HCT116 (cell line): ENCODE measurements at regions of chr3 and their contacts with region 1.

Region 1: DNA sequence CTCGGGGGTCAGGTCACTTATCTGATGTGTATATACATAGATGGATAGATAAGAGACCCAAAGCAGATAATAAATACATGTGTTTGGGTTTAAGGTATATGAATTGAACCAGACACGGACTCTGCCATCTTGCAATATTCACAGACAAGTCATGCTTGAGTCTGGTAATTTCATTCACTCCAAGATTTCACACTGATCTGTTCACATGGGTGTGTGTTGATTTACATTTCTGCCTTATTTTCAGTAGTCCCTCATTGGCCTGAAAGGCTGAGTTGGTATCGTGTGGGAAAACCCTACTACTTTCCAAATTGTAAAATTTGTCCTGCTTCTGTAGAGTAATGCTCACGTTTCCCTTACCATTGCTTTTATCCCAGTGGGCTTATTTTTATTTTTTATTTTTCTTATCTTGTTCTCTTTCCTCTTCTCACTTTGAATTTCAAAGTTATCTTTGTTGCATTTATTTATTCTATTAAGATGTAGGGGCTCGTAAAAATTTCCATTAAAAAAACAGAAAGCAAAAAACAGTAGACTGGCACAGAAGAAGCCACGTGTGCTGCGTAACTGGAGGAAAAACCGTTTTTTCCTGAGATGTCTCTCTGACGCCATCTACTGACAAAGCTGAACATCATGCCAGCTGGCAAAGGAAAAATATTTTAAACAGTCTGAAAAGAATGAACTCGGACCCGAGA is 10.8 kb upstream of the MFSD1 start:
- DNase-seq: peak; percentile 48
- ATAC-seq: peak; percentile 73
- H3K4me3 ChIP-seq: no peak overlapping the region
- H3K27ac ChIP-seq: no peak overlapping the region
- H3K4me1 ChIP-seq: peaks cover 2 to 4% of the 10 kb centered on the region in 2 experiments; a peak in 3 of 4 replicates
- H3K27me3 ChIP-seq: no peaks in the 10 kb centered on the region
- CTCF ChIP-seq: peak; percentile 79 to 81 (median 80)
- POLR2A ChIP-seq: no peak
- RAD21 ChIP-seq: peak; percentile 81

Region 2: DNA sequence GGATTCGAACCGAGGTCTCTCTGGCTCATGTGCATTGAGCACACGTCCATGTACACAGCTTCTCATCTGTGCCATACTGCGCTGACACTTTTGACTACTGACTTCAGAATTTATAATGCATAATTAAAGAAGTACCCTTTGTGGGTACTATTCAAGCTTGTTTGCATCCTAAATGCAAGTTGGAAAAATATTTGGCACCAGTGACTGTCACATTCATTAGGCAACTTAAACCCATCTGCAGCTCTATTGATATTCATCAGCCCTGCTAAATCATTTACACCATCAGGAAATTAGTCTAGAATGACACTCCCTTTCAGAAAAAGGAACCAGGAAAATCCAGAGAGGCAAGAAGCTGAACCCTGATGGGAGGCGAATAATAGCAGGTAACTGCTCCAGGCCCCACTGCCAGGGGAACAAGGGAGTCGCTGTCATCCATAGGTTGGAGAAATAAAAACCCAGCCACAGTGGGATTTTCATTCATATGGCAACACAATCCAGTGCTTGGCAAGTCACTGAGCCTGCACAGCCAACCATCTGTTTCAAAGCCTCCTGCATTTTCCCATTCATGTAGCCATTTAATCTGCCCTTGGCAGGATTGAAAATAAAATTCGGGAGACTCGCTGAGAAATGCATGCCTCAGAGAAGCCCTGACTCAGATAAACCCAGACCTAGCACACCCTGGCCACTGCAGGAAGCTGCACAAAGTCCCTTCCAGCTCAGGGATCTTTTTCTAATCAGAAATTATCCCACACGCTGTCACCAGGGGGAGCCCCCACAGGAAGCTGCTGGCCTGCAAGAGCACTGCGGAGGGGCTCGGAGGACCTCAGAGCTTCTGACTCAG is 1184.8 kb before region 1 on chr3:
- CTCF ChIA-PET with region 1: no interaction called
- POLR2A ChIA-PET with region 1: no interaction called
- RAD21 ChIA-PET with region 1: no interaction called
- intact Hi-C with region 1: loop called (anchors 10 kb)
- DNase-seq: peak; percentile 54
- ATAC-seq: peak; percentile 97
- H3K4me3 ChIP-seq: no peak overlapping the region
- H3K27ac ChIP-seq: no peak overlapping the region
- H3K4me1 ChIP-seq: peaks cover 0 to 7% of the 10 kb centered on the region in 2 experiments; a peak in 1 of 4 replicates
- H3K27me3 ChIP-seq: no peaks in the 10 kb centered on the region
- CTCF ChIP-seq: peak; percentile 54 to 87 (median 85); a peak in 5 of 6 replicates
- POLR2A ChIP-seq: no peak
- RAD21 ChIP-seq: peak; percentile 56

Region 3: DNA sequence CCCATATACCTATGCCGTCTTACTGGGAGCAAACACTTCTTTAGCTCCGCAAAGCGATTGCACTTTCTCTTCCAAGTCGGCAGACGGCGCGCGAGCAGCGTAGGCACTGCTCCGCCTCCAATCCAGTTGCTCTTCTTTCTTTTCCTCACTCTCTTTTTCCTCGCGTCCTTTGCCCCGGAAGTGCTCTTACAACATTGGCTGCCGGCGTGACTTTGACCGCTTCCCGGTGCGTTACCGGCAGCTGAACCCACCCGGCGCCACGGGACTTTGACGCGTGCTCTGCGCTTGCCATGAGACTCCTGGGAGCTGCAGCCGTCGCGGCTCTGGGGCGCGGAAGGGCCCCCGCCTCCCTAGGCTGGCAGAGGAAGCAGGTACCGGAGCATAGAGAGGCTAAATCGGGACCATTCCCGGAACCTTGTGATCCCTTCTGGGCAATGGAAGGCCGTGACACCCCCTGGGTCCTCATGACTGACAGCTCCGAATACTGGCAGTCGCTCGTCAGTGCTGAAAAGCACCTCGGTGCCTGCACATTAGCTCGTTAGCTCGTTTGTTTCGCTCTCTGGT is 146.6 kb before region 1 on chr3 and contains the start of gene GFM1:
- CTCF ChIA-PET with region 1: interaction called, 12 read pairs
- POLR2A ChIA-PET with region 1: no interaction called
- RAD21 ChIA-PET with region 1: no interaction called
- intact Hi-C with region 1: no loop called
- DNase-seq: peak; percentile 93
- ATAC-seq: peak; percentile 97
- H3K4me3 ChIP-seq: peak within 1 kb of the TSS; percentile 86 to 91
- H3K27ac ChIP-seq: peak within 1 kb of the TSS; percentile 65
- H3K4me1 ChIP-seq: peaks cover 7 to 16% of the 10 kb centered on the region in 2 experiments; a peak in 3 of 4 replicates
- H3K27me3 ChIP-seq: no peaks in the 10 kb centered on the region
- CTCF ChIP-seq: peak; percentile 71 to 79 (median 78)
- POLR2A ChIP-seq: no peak
- RAD21 ChIP-seq: peak; percentile 56
- total RNA-seq, gene GFM1: 38.7 TPM

Region 4: DNA sequence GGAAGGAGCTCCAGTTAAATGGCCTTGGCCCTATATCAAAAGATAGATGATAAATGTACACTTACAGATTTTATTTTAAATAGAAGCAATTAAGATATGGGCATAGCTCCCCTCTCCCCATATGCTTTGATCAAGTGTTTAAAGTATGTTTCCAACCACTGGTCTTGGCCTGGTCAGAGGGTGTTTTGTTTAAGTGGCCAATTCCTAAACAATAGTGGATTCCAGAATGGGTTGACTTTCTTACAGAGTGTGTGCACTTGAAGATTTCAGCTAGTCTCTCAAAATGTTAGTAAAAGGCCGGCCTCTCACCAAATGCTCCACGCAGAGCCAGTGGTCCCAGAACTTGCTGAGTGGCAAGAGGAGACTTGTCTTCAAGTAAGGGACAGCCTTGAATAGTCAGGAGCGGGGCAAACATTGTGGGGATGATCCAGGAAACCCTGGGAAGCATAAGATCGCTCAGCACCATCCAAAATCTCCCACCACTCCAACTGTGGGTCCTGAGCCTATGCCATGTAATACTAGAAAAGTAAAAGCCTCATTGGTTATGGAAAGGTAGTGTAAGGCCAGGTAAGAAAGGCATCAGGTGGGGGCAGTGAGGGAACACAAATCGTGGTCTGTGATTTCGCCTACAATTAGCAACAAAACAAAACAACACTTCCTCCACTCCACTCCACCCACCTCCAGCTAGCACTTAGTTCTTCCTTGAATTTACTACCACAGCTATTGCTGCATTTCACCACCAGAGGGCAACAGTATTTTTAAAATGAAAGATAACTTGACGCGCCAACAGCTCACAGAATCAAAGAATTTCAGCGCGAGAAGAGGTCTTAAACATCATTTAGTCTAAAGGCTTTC is 63.6 kb before region 1 on chr3:
- CTCF ChIA-PET with region 1: interaction called, 32 read pairs
- POLR2A ChIA-PET with region 1: no interaction called
- RAD21 ChIA-PET with region 1: no interaction called
- intact Hi-C with region 1: loop called (anchors 1 kb)
- DNase-seq: peak; percentile 42
- ATAC-seq: peak; percentile 73
- H3K4me3 ChIP-seq: no peak overlapping the region
- H3K27ac ChIP-seq: no peak overlapping the region
- H3K4me1 ChIP-seq: peaks cover 13 to 27% of the 10 kb centered on the region in 2 experiments
- H3K27me3 ChIP-seq: no peaks in the 10 kb centered on the region
- CTCF ChIP-seq: peak; percentile 42 to 84 (median 72); a peak in 5 of 6 replicates
- POLR2A ChIP-seq: no peak
- RAD21 ChIP-seq: peak; percentile 60

Region 5: GRCh38 chr3:159047361-159047760 is 256.3 kb after region 1 on chr3:
- CTCF ChIA-PET with region 1: no interaction called
- POLR2A ChIA-PET with region 1: no interaction called
- RAD21 ChIA-PET with region 1: no interaction called
- intact Hi-C with region 1: no loop called
- DNase-seq: no peak
- ATAC-seq: no peak
- H3K4me3 ChIP-seq: no peak overlapping the region
- H3K27ac ChIP-seq: no peak overlapping the region
- H3K4me1 ChIP-seq: no peaks in the 10 kb centered on the region
- H3K27me3 ChIP-seq: no peaks in the 10 kb centered on the region
- CTCF ChIP-seq: no peak
- POLR2A ChIP-seq: no peak
- RAD21 ChIP-seq: no peak

Region 6: GRCh38 chr3:159260049-159260662 is 469.1 kb after region 1 on chr3:
- CTCF ChIA-PET with region 1: interaction called, 34 read pairs
- POLR2A ChIA-PET with region 1: no interaction called
- RAD21 ChIA-PET with region 1: interaction called, 4 read pairs
- intact Hi-C with region 1: loop called (anchors 2 kb)
- DNase-seq: peak; percentile 45
- ATAC-seq: peak; percentile 74
- H3K4me3 ChIP-seq: no peak overlapping the region
- H3K27ac ChIP-seq: no peak overlapping the region
- H3K4me1 ChIP-seq: no peaks in the 10 kb centered on the region
- H3K27me3 ChIP-seq: 0 out of 2 replicates have a peak, but pooled peaks cover 6% of the 10 kb centered on the region
- CTCF ChIP-seq: peak; percentile 59 to 89 (median 83)
- POLR2A ChIP-seq: no peak
- RAD21 ChIP-seq: peak; percentile 89